A673 (cell line): ENCODE measurements at regions of chr14 and their contacts with region 1.

Region 1: GRCh38 chr14:76294876-76295275 is 81.1 kb upstream of the ESRRB start:
- DNase-seq: no peak
- H3K4me3 ChIP-seq: no peak overlapping the region
- H3K27ac ChIP-seq: no peak overlapping the region
- H3K4me1 ChIP-seq: no peaks in the 10 kb centered on the region
- H3K27me3 ChIP-seq: peaks cover 79% of the 10 kb centered on the region
- CTCF ChIP-seq: no peak

Region 2: DNA sequence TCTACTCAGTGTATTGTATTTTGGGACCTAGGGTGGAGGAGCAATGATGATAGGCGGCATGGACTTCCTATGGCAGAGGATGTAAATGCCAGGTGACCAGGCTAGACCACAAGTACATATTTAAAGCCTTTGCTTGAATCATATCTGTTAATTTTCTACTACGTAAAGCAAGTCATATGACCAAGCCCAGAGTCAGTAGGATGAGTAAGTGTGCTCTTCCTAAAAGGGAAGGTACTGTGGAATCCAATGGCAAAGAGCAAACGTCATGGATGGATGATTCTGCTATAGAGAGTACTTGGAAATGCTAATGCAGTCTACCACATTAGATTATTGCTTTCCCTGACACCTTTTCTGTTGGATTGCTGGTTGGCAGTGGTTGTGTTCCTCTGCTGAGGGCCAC is 126.3 kb before region 1 on chr14:
- CTCF ChIA-PET with region 1: no interaction called
- POLR2A ChIA-PET with region 1: interaction called, 17 read pairs
- intact Hi-C with region 1: no loop called
- DNase-seq: no peak
- H3K4me3 ChIP-seq: no peak overlapping the region
- H3K27ac ChIP-seq: no peak overlapping the region
- H3K4me1 ChIP-seq: no peaks in the 10 kb centered on the region
- H3K27me3 ChIP-seq: no peaks in the 10 kb centered on the region
- CTCF ChIP-seq: no peak

Region 3: DNA sequence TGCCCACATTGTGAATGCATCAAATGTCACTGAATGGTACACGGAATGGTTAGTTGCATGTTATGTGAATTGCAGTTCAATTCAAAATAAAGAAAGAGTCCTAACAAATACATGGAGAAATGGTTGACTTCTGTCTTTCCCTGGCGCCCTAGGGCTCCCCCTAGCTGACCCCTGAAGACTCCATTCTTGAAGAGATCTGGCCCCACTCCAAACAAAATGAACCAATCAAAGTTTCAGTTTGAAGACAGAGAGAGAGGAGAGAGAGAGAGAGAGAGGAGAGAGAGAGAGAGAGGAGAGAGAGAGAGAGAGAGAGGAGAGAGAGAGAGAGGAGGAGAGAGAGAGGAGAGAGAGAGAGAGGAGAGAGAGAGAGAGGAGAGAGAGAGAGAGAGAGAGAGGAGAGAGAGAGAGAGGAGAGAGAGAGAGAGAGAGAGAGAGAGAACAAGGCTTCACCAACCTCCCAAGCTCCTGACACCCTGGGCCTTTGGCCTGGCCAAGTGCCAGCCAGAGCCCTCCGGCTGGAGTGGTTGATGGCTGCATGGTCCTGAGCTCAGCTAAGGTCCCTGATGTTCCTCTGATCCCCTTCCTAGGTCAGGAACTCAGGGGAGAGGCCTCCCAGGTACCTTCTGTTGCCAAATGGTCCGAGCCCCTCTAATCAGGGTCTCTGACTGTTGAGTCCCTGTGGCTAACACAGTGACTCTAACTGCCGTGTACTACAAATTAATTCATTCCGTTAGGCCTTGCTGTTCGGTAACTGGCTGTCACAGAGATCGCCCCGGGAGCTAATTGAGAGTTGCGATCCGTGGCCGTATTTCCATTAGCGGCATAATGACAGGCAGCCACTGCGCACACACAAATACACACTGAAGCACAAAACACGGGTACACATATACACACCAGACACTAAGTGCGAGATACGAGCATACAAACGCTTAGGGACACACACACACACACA is 269.9 kb after region 1 on chr14:
- CTCF ChIA-PET with region 1: no interaction called
- POLR2A ChIA-PET with region 1: no interaction called
- intact Hi-C with region 1: no loop called
- DNase-seq: peak; percentile 47
- H3K4me3 ChIP-seq: no peak overlapping the region
- H3K27ac ChIP-seq: no peak overlapping the region
- H3K4me1 ChIP-seq: no peaks in the 10 kb centered on the region
- H3K27me3 ChIP-seq: no peaks in the 10 kb centered on the region
- CTCF ChIP-seq: peak; percentile 37